A549 (cell line): ENCODE measurements at regions of chr10 and their contacts with region 1.

Region 1: GRCh38 chr10:6401562-6402348 is 178.3 kb downstream of the PRKCQ start:
- DNase-seq: peak; percentile 96 to 97
- ATAC-seq: peak; percentile 90
- H3K4me3 ChIP-seq: peak overlapping the region; percentile 25; the same call in 1 of the 3 replicates
- H3K27ac ChIP-seq: peak overlapping the region; percentile 91 to 96
- H3K4me1 ChIP-seq: peaks cover 72% of the 10 kb centered on the region
- CTCF ChIP-seq: peak; percentile 89
- EP300 ChIP-seq: peak; percentile 43 to 66; a peak in 2 of 5 replicates
- POLR2A ChIP-seq: no peak
- RAD21 ChIP-seq: peak; percentile 99

Region 2: GRCh38 chr10:6114299-6114698 is 287.5 kb before region 1 on chr10:
- CTCF ChIA-PET with region 1: interaction called, 65 read pairs
- POLR2A ChIA-PET with region 1: interaction called, 4 read pairs
- DNase-seq: no peak
- ATAC-seq: no peak
- H3K4me3 ChIP-seq: no peak overlapping the region
- H3K27ac ChIP-seq: no peak overlapping the region
- H3K4me1 ChIP-seq: peaks cover 32% of the 10 kb centered on the region
- CTCF ChIP-seq: no peak
- EP300 ChIP-seq: no peak
- POLR2A ChIP-seq: no peak
- RAD21 ChIP-seq: no peak

Region 3: DNA sequence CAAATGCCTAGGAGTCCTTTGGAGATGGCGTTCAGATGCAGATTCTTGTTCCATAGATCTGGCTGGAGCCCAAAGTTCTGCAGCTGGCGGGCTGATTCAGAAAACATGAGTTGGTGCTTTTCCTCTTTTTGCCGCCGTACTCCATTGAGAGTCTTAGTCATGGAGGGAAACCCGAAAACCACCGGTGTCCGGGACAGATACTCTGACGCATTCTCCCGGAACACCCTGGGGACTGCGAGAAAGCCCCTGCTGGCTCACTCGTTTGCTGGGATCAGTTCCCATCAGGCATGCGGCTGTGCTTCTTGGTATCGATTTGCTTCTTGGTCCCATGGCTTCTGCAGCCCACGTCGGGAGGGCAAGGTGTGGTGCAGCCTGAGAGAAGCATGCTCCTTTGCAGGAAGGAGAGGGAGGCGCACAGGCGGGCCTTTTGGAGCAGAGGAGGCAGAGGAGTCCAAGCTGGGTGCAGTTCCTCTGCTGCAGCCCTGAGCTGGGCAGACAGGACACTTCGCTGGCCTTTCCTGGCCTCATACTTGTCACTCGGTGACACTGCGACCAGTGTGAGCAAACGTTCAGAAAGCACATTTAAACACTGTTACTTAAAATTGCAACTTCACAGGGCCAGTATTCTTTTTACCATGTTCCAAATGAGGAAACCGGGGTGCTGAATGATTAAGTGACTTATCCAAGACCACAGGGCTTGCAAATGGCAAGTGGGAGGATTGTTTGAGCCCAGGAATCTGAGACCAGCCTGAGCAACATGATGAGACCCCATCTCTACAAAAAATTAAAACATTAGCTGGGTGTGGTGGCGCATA is 229.7 kb before region 1 on chr10:
- CTCF ChIA-PET with region 1: interaction called, 14 read pairs
- POLR2A ChIA-PET with region 1: no interaction called
- DNase-seq: no peak
- ATAC-seq: no peak
- H3K4me3 ChIP-seq: no peak overlapping the region
- H3K27ac ChIP-seq: no peak overlapping the region
- H3K4me1 ChIP-seq: 0 out of 3 replicates have a peak, but pooled peaks cover 4% of the 10 kb centered on the region
- CTCF ChIP-seq: no peak
- EP300 ChIP-seq: no peak
- POLR2A ChIP-seq: no peak
- RAD21 ChIP-seq: no peak

Region 4: GRCh38 chr10:6218692-6219493 is 182.9 kb before region 1 on chr10:
- CTCF ChIA-PET with region 1: interaction called, 123 read pairs
- POLR2A ChIA-PET with region 1: interaction called, 3 read pairs
- DNase-seq: no peak
- ATAC-seq: peak in 1 of 2 experiments; percentile 1; a peak in 2 of 6 replicates
- H3K4me3 ChIP-seq: no peak overlapping the region
- H3K27ac ChIP-seq: peak overlapping the region; percentile 61 to 82
- H3K4me1 ChIP-seq: peaks cover 100% of the 10 kb centered on the region
- CTCF ChIP-seq: no peak
- EP300 ChIP-seq: no peak
- POLR2A ChIP-seq: no peak
- RAD21 ChIP-seq: no peak

Region 5: DNA sequence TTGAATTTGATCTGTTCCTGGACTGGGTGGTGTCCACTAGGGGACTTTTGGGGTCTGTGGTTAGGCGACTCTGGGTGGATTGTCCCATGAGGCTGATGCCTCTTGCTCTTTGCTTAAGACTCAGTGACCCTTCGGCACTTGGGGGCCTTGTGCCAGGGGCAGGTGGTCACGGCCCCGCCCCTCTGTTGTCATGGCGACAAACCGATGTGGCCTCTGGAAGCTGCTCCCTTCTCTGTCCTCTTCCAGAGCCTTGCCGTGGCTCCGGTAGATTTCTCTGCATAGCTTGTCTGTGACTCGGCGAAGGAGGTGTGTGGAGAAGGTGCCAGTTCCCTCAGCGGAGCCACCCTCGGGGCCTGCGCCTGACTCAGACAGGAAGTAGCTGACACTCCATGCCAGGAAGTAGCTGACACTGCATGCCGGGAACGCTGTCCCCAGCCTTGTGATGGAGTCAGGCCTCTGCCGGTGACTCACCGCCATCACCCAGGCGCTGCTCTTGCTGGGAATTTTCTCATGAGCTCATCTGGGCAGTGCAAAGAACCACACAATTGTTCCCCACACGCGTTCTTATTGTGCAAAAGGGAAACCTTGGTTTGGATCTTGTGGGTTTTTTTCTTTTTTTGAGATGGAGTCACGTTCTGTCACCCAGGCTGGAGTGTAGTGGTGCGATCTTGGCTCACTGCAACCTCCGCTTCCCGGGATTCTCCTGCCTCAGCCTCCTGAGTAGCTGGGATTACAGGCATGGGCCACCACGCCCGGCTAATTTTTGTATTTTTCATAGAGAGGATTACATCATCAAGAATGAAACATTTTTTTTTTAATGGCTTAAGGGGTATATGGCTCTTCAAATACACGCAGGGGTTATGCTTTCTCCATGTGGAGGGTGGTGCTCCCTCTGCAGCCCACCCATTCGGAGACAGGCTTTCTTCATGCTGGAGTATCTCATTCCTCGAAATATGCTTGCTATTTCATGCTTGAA is 126.4 kb before region 1 on chr10:
- CTCF ChIA-PET with region 1: interaction called, 14 read pairs
- POLR2A ChIA-PET with region 1: interaction called, 16 read pairs
- DNase-seq: peak; percentile 96 to 99
- ATAC-seq: peak; percentile 86 to 93
- H3K4me3 ChIP-seq: peak overlapping the region; percentile 35
- H3K27ac ChIP-seq: peak overlapping the region; percentile 98 to 100
- H3K4me1 ChIP-seq: peaks cover 61% of the 10 kb centered on the region
- CTCF ChIP-seq: no peak
- EP300 ChIP-seq: peak; percentile 48 to 82; a peak in 3 of 5 replicates
- POLR2A ChIP-seq: peak; percentile 41; the same call in 1 of the 2 replicates
- RAD21 ChIP-seq: peak in 1 of 2 experiments; percentile 43; a peak in 3 of 5 replicates

Region 6: GRCh38 chr10:6351495-6351894 is 50.3 kb before region 1 on chr10:
- CTCF ChIA-PET with region 1: interaction called, 10 read pairs
- POLR2A ChIA-PET with region 1: interaction called, 3 read pairs
- DNase-seq: peak in 1 of 2 experiments; percentile 19
- ATAC-seq: no peak
- H3K4me3 ChIP-seq: no peak overlapping the region
- H3K27ac ChIP-seq: peak overlapping the region; percentile 84 to 88
- H3K4me1 ChIP-seq: peaks cover 35% of the 10 kb centered on the region
- CTCF ChIP-seq: no peak
- EP300 ChIP-seq: no peak
- POLR2A ChIP-seq: no peak
- RAD21 ChIP-seq: no peak